AG04450 (cell line): ENCODE measurements at regions of chr1 and their contacts with region 1.

Region 1: GRCh38 chr1:151024540-151025146 is 11.7 kb upstream of the BNIPL start:
- DNase-seq: no peak
- H3K4me3 ChIP-seq: no peak overlapping the region
- H3K27ac ChIP-seq: no peak overlapping the region
- H3K27me3 ChIP-seq: no peaks in the 10 kb centered on the region
- CTCF ChIP-seq: peak; percentile 80

Region 2: GRCh38 chr1:151012684-151013471 is 11.8 kb before region 1 on chr1:
- CTCF ChIA-PET with region 1: interaction called, 10 read pairs
- POLR2A ChIA-PET with region 1: interaction called, 3 read pairs
- DNase-seq: no peak
- H3K4me3 ChIP-seq: no peak overlapping the region
- H3K27ac ChIP-seq: no peak overlapping the region
- H3K27me3 ChIP-seq: no peaks in the 10 kb centered on the region
- CTCF ChIP-seq: no peak

Region 3: GRCh38 chr1:151156515-151156819 is 131.8 kb after region 1 on chr1 and contains the start of gene TNFAIP8L2:
- CTCF ChIA-PET with region 1: interaction called, 27 read pairs
- POLR2A ChIA-PET with region 1: no interaction called
- DNase-seq: no peak
- H3K4me3 ChIP-seq: no peak within 1 kb of the TSS
- H3K27ac ChIP-seq: no peak within 1 kb of the TSS
- H3K27me3 ChIP-seq: no peaks in the 10 kb centered on the region
- CTCF ChIP-seq: no peak
- polyA plus RNA-seq, gene TNFAIP8L2: not detected in 2 replicates

Region 4: DNA sequence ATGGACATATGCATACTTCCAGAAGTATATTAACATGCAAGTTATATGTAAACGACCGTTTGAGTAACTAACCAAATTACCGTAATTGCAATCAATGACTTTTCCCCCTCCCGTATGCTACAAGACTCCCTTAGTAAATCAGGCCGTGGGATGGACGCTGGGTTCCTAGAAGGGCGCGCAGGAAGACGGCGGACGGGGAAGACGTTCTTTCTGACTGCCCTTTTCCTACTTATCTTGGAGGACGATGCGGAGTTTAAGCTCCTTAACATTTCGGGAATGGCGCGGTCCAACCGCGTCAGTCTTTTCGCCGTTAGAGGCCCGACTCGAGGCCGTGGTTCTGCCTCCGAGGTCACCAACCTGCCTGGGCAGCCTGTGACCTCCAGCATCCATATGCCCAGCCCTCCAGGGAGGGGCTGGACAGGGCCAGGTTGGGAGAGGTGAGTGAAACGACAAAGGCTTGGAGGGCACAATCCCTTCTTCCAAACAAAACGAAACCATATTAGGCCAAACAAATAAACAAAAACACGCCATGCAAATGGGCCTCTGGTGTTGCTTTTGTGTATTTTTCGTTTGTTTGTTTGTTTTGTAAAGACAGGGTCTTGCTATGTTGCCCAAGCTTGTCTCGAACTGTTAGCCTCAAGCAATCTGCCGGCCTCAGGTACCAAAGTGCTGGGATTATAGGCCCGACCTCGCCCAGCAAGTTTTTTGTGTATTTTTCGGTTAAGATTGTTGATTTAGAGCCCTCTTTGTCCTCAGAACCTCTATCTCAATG is 303.4 kb after region 1 on chr1:
- CTCF ChIA-PET with region 1: no interaction called
- POLR2A ChIA-PET with region 1: no interaction called
- DNase-seq: no peak
- H3K4me3 ChIP-seq: peak overlapping the region; percentile 59
- H3K27ac ChIP-seq: peak overlapping the region; percentile 62
- H3K27me3 ChIP-seq: no peaks in the 10 kb centered on the region
- CTCF ChIP-seq: no peak